ENCODE measurements at regions of chr1 and their contacts with region 1.

Region 1: DNA sequence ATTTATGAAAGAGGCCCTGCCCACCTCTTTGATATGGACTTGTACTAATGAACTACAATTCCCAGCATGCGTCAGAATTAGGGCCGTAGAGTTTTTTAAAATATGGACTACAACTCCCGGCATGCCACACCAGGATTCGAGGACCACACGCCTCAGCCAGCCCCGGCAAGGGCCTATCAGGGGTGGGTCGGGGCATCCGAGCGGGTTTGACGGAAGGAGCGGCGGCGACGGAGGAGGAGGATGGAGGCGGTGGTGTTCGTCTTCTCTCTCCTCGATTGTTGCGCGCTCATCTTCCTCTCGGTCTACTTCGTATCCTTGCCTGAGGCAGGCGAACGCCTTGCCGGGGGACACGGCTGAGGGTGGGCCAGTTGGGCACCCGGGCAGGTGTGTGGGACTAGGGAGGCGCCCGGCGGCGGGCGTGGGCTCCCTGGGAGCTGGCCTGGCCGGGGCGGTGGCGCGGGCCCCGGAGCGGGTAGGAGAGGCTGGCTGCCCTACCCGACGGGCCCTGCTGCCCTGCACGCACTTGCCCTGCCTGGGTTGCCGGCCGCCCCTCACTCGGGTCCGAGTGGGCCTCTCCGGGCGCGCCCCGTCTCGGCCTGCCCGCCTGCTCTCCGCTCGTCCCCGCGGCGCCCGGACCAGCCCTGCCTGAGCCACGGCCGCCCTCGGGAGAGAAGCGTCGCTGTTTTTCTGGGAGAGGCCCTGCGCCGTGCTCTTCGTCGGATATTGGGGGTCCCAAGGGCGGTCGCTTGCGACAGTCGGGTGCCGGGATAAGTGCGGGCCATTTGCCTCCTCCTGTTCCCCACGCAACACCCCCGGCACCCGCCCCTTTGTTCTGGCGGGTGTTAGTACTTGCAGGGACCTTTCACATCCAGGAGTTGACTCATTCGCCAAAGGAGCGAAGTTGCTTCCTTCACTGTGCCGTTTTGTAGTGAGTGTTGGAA is at the start of gene CNIH4:
- DNase-seq: peak; percentile 94
- H3K4me3 Mint-ChIP-seq: peak within 1 kb of the TSS; percentile 89
- H3K27ac Mint-ChIP-seq: peak within 1 kb of the TSS; percentile 86
- H3K4me1 Mint-ChIP-seq: peaks cover 31% of the 10 kb centered on the region
- H3K27me3 Mint-ChIP-seq: no peaks in the 10 kb centered on the region
- total RNA-seq, gene CNIH4: 34.7 to 35.1 TPM

Region 2: GRCh38 chr1:224338150-224338838 is 18.7 kb before region 1 on chr1:
- CTCF ChIA-PET with region 1: interaction called, 3 read pairs
- intact Hi-C with region 1: loop called (anchors 1 kb)
- DNase-seq: no peak
- H3K4me3 Mint-ChIP-seq: no peak overlapping the region
- H3K27ac Mint-ChIP-seq: no peak overlapping the region
- H3K4me1 Mint-ChIP-seq: peaks cover 14% of the 10 kb centered on the region
- H3K27me3 Mint-ChIP-seq: no peaks in the 10 kb centered on the region

Region 3: DNA sequence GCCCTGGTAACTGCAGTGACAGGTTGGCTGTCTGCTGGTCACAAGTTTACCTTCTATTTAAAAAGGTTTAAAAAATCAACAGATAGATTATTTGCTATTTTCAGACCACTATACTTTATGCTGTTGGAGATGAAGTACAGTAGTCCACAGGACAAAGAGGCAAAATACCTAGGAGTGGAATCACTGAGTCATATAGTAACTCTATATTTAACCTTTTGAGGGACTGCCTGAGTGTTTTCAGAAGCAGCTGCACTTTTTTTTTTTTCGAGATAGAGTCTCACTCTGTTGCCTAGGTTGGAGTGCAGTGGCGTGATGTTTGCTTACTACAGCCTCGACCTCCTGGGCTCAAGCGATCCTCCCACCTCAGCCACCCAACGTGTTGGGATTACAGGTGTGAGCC is 11.5 kb after region 1 on chr1:
- CTCF ChIA-PET with region 1: interaction called, 5 read pairs
- intact Hi-C with region 1: loop called (anchors 1 kb)
- DNase-seq: no peak
- H3K4me3 Mint-ChIP-seq: no peak overlapping the region
- H3K27ac Mint-ChIP-seq: peak overlapping the region; percentile 56
- H3K4me1 Mint-ChIP-seq: peaks cover 59% of the 10 kb centered on the region
- H3K27me3 Mint-ChIP-seq: no peaks in the 10 kb centered on the region

Measured in activated naive CD4-positive, alpha-beta T cell treated with anti-CD3 and anti-CD28 coated beads for 36 hours (primary cell).